ENCODE measurements at regions of chr5 and their contacts with region 1.

Region 1: DNA sequence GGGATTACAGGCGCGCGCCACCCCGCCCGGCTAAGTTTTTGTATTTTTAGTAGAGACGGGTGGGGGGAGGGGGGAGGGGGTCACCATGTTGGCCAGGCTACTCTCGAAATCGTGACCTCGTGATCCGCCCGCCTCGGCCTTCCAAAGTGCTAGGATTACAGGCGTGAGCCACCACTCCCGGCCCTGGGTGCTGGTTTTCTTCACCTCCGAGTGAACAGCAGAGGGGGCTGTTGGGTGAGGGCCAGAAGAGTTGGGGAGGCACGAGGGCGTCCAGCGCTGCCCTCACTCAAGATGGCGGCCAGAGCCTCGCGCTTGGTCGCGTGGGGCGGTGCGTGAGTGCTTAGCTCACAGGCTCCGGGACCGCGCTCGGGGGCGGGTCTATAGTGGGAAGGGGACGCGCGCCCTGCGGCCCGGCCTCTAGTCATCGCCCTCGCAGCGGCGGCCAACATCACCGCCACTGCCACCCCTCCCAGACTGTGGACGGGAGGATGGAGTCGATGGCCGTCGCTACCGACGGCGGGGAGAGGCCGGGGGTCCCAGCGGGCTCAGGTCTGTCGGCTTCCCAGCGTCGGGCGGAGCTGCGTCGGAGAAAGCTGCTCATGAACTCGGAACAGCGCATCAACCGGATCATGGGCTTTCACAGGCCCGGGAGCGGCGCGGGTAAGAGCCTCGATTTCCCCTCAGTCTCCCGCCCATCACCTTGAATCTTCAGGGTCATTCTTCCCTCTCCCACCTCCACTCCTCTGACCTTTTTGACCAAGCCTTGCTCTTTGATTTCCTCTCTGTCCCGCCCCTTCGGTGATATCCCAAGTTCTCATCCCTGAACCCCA is at the start of gene CAMLG:
- DNase-seq: peak; percentile 98
- ATAC-seq: peak; percentile 99 to 100 (median 100)
- H3K4me3 ChIP-seq: peak within 1 kb of the TSS; percentile 64 to 95 (median 80)
- H3K27ac ChIP-seq: peak within 1 kb of the TSS; percentile 70 to 96 (median 90)
- H3K4me1 ChIP-seq: peaks cover 0 to 38% (median 15%) of the 10 kb centered on the region in 9 donors
- H3K27me3 ChIP-seq: no peaks in the 10 kb centered on the region
- CTCF ChIP-seq: peak; percentile 18 to 78 (median 66)
- total RNA-seq, gene CAMLG: 14.6 to 22.1 (median 18.1) TPM

Region 2: GRCh38 chr5:134758504-134759341 is 20.4 kb after region 1 on chr5 and contains the start of gene DDX46:
- intact Hi-C with region 1: loop called in 1 of 10 experiments (anchors 2 kb)
- DNase-seq: peak; percentile 93 to 94
- ATAC-seq: peak; percentile 97 to 100 (median 99)
- H3K4me3 ChIP-seq: peak within 1 kb of the TSS; percentile 66 to 99 (median 88)
- H3K27ac ChIP-seq: peak within 1 kb of the TSS in 9 of 10 donors; percentile 63 to 90 (median 76)
- H3K4me1 ChIP-seq: peaks cover 3 to 34% (median 24%) of the 10 kb centered on the region in 9 donors
- H3K27me3 ChIP-seq: no peaks in the 10 kb centered on the region
- CTCF ChIP-seq: peak; percentile 43 to 95 (median 77)
- total RNA-seq, gene DDX46: 26.1 to 34.8 (median 29.7) TPM

Region 3: GRCh38 chr5:135016861-135017290 is 278.5 kb after region 1 on chr5:
- intact Hi-C with region 1: no loop called
- DNase-seq: no peak
- ATAC-seq: peak in 2 of 8 donors; percentile 25 to 27
- H3K4me3 ChIP-seq: no peak overlapping the region
- H3K27ac ChIP-seq: no peak overlapping the region
- H3K4me1 ChIP-seq: peaks cover 0 to 23% (median 8%) of the 10 kb centered on the region in 9 donors
- H3K27me3 ChIP-seq: no peaks in the 10 kb centered on the region
- CTCF ChIP-seq: no peak